ENCODE measurements at regions of chr15 and their contacts with region 1.

Region 1: DNA sequence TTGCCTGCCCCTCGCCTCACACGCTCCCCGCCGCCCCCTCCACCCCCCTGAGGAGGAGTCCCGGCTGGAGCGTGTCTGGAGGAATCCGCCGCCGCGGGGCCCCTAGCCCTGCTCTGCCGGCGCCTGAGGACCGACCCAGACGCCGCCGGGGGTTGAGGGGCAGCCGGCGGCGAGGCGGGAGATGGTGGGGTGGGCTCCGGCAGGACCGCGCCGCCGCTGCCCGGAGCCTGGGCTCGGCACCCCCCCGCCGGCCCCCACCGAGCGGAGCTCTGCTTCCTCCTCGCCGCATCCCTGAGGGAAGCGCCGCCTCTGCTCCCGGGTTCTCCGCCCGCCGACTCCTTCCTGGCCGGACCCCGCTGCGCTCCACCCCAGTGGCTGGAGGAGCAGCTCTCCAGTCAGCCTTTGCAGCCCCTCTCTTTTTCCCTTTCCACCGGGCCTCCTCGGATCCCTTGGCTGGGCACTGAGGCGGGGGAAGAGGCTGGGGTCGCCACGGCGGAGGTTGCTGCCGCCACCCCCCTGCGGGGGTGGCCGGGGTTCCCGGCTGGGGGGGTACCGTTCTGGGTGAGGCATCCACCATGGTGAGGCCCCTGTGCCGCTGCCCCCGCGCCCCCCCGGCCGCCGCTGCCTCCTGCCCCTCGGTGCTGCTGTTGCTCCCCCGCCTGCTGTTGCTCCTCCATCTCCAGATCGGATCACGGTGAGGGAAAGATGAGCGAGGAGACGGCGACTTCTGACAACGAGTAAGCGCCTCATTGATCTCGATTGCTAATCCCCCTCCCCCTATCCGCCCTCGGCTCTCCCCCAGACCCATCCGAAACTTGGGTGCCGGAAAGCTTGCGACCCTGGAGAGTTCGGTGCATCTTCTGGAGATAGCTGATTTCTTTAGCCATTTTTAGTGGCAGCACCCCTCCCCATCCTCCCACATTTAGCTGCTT is at the start of gene SPRED1:
- DNase-seq: peak; percentile 14
- ATAC-seq: peak; percentile 66
- H3K4me3 ChIP-seq: peak within 1 kb of the TSS; percentile 78 to 84 (median 82)
- H3K27ac ChIP-seq: peak within 1 kb of the TSS; percentile 97
- H3K4me1 ChIP-seq: peaks cover 34% of the 10 kb centered on the region
- H3K27me3 ChIP-seq: no peaks in the 10 kb centered on the region; a peak in 1 of 5 replicates
- CTCF ChIP-seq: no peak
- EP300 ChIP-seq: no peak
- POLR2A ChIP-seq: no peak; a peak in 1 of 4 replicates
- RAD21 ChIP-seq: no peak
- total RNA-seq, gene SPRED1: 9.4 and 9.6 TPM in 2 replicates

Region 2: DNA sequence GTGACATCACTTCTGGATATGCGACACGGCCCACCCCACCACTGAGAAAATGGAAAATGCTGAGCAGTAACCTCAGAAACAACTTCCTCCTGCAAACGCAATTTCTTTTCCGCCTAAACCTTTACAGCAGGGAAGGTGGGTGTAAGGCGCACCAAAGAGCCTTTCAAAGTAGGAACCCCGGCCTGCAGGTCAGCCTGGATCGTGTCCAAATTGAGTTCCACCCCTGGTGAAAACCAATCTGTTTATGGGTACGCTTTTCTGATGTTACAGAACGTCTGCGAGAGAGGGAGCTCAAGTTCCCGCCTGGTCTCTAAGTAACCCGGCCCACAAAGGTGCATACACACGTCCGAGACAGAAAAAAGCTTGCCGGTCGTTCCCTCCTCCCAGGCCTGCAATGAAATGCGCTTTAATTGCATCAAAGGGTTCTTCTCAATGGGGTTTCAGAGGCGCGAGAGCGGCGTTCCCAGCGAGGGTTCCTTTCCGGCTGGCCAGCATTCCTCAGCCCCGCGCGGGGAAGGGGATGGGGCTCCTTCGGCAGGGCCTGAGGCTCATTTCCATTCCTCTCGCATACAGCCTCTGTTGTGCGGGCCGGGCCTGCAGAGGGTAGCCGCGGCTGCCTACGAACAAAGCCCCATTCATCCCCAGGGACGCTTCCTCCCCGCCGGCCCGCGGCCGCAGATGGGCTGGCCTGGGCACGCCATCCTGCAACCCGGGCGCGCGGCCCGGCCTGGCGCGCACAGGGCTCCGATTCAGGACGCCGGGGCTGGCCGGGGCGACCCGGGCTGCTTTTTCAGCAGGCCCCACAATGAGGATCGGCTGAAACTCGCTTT is 180.2 kb before region 1 on chr15:
- CTCF ChIA-PET with region 1: no interaction called
- POLR2A ChIA-PET with region 1: interaction called, 29 read pairs
- in situ Hi-C with region 1: loop called (anchors 10 kb)
- intact Hi-C with region 1: loop called (anchors 1 kb)
- DNase-seq: peak; percentile 75
- ATAC-seq: peak; percentile 98
- H3K4me3 ChIP-seq: peak overlapping the region; percentile 56 to 81 (median 62)
- H3K27ac ChIP-seq: peak overlapping the region; percentile 89
- H3K4me1 ChIP-seq: peaks cover 15% of the 10 kb centered on the region
- H3K27me3 ChIP-seq: no peaks in the 10 kb centered on the region; a peak in 1 of 5 replicates
- CTCF ChIP-seq: peak; percentile 51
- EP300 ChIP-seq: no peak
- POLR2A ChIP-seq: peak; percentile 46 to 47; a peak in 3 of 4 replicates
- RAD21 ChIP-seq: no peak

Region 3: DNA sequence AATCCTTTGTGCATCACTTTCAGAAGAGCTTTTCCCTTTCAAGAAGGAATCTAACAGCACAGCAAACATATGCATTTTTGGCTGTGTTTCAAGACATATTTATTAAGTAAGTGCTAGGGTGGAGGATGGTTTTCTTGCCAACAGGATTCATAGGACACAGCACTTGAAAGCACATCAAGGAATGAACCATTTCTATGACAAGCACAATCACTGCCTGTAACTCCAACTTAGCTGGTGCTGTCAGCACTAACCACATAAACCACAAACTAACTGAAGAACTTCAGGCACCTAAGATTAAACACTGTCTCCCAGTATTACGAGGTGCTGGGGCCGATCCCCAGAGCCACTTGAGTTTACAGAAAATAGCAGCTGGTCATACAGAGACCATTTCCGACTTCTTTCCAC is 35.6 kb before region 1 on chr15:
- CTCF ChIA-PET with region 1: no interaction called
- POLR2A ChIA-PET with region 1: interaction called, 20 read pairs
- in situ Hi-C with region 1: no loop called
- intact Hi-C with region 1: no loop called
- DNase-seq: no peak
- ATAC-seq: no peak
- H3K4me3 ChIP-seq: no peak overlapping the region
- H3K27ac ChIP-seq: no peak overlapping the region
- H3K4me1 ChIP-seq: peaks cover 30% of the 10 kb centered on the region
- H3K27me3 ChIP-seq: 0 out of 5 replicates have a peak, but pooled peaks cover 0 to 4% of the 10 kb centered on the region in 2 experiments
- CTCF ChIP-seq: no peak
- EP300 ChIP-seq: no peak
- POLR2A ChIP-seq: no peak
- RAD21 ChIP-seq: no peak

Region 4: DNA sequence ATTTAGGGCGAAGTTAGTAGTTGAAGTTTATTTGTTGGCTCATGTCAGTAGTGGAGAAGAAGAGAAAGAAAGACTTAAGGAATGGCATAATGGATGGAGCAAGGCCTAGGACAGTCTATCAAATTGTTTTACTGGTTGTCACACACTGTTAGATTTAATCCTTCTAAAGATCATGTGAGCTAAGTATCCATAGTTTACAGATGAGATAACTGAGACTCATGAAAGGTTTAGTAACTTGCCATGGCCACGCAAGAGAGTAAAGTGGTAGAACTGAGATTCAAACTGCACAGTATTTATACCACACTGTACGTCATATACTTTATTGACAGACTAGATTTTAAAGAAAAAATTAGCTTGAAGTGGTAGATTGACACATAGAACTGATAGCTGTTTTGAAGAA is 11.2 kb after region 1 on chr15:
- CTCF ChIA-PET with region 1: no interaction called
- POLR2A ChIA-PET with region 1: interaction called, 10 read pairs
- in situ Hi-C with region 1: no loop called
- intact Hi-C with region 1: no loop called
- DNase-seq: no peak
- ATAC-seq: no peak
- H3K4me3 ChIP-seq: no peak overlapping the region
- H3K27ac ChIP-seq: no peak overlapping the region
- H3K4me1 ChIP-seq: no peaks in the 10 kb centered on the region
- H3K27me3 ChIP-seq: no peaks in the 10 kb centered on the region
- CTCF ChIP-seq: no peak
- EP300 ChIP-seq: no peak
- POLR2A ChIP-seq: no peak
- RAD21 ChIP-seq: no peak

Region 5: GRCh38 chr15:38471974-38472373 is 219.2 kb after region 1 on chr15:
- CTCF ChIA-PET with region 1: no interaction called
- POLR2A ChIA-PET with region 1: no interaction called
- in situ Hi-C with region 1: no loop called
- intact Hi-C with region 1: no loop called
- DNase-seq: no peak
- ATAC-seq: no peak
- H3K4me3 ChIP-seq: no peak overlapping the region
- H3K27ac ChIP-seq: no peak overlapping the region
- H3K4me1 ChIP-seq: no peaks in the 10 kb centered on the region
- H3K27me3 ChIP-seq: no peaks in the 10 kb centered on the region
- CTCF ChIP-seq: no peak
- EP300 ChIP-seq: no peak
- POLR2A ChIP-seq: no peak
- RAD21 ChIP-seq: no peak